ENCODE measurements at regions of chr1 and their contacts with region 1.

Region 1: DNA sequence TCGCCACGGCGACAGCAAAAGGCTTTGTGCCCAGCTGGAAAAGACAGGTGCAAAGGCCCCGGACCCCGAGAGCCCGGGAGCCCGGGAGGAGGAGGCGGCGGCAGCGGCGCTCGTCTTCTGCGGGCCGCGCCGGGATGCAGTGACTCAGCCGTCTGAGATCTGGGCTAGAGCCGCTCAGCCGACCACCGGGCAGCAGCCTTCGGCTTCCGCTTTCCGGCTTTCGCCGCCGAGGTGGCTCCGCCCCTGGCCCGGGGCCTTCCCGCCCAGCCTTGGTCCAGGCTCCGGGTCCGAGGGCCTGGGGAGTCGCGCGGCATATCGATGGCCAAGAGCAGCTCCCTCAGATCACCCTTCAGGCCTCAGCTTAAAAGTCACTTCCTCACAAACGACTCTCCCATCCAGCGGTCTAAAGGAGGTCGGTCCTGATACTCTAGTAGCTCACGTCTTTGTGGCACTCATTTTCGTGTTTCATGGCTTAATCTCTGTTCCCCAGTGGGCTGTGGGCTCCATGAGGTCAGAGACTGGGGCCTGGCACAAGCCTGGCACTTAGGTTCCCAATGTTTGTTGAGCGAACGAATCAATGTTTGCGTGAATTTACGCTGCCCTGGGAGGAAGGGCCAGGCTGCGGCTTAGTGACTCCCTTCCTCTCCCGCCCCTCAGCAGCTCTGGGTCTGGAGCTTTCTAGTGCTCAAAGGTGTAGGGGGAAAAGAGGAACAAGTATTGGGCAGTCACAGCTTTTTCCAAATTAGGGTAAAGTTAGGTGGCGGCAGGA is at the start of gene PHTF1:
- DNase-seq: peak; percentile 69 to 82 (median 80)
- H3K4me3 ChIP-seq: peak within 1 kb of the TSS; percentile 86 to 97 (median 92)
- H3K27ac ChIP-seq: peak within 1 kb of the TSS; percentile 90 to 98 (median 96)
- H3K4me1 ChIP-seq: peaks cover 0 to 20% of the 10 kb centered on the region in 2 donors
- H3K27me3 ChIP-seq: no peaks in the 10 kb centered on the region
- CTCF ChIP-seq: no peak
- POLR2A ChIP-seq: peak in 1 of 2 donors; percentile 81
- total RNA-seq, gene PHTF1: 16.8 to 37.9 (median 21.8) TPM

Region 2: GRCh38 chr1:113804421-113805255 is 45.1 kb after region 1 on chr1:
- intact Hi-C with region 1: loop called in 1 of 2 experiments (anchors 10 kb)
- DNase-seq: peak in 2 of 7 donors; percentile 24 to 33
- H3K4me3 ChIP-seq: peak overlapping the region in 1 of 4 donors; percentile 10
- H3K27ac ChIP-seq: peak overlapping the region; percentile 48 to 76 (median 71)
- H3K4me1 ChIP-seq: peaks cover 29 to 54% of the 10 kb centered on the region in 2 donors
- H3K27me3 ChIP-seq: no peaks in the 10 kb centered on the region
- CTCF ChIP-seq: no peak
- POLR2A ChIP-seq: peak in 1 of 2 donors; percentile 11

Region 3: DNA sequence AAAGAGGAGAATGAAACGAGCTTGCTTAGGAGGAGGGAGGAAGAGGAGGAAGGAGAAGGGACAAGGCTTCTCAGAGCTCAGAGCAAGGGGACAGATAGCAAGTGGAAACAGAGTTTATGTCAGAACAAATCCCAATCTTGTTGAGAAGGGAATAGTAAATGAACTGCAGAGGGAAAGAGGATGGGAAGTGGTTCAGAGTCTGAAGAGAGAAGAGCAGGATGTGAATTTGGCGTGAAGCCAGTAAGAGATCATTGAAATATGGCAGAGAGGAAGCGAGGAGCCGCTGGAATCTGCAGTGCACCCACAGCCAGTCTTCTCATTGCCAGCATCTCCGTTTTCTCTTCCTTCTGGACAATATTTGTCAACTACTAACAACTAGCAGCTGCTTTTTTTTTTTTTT is 238.8 kb after region 1 on chr1:
- intact Hi-C with region 1: no loop called
- DNase-seq: peak in 2 of 7 donors; percentile 23 to 54
- H3K4me3 ChIP-seq: no peak overlapping the region
- H3K27ac ChIP-seq: peak overlapping the region in 1 of 5 donors; percentile 32
- H3K4me1 ChIP-seq: peaks cover 0 to 6% of the 10 kb centered on the region in 2 donors
- H3K27me3 ChIP-seq: no peaks in the 10 kb centered on the region
- CTCF ChIP-seq: no peak
- POLR2A ChIP-seq: no peak

Region 4: DNA sequence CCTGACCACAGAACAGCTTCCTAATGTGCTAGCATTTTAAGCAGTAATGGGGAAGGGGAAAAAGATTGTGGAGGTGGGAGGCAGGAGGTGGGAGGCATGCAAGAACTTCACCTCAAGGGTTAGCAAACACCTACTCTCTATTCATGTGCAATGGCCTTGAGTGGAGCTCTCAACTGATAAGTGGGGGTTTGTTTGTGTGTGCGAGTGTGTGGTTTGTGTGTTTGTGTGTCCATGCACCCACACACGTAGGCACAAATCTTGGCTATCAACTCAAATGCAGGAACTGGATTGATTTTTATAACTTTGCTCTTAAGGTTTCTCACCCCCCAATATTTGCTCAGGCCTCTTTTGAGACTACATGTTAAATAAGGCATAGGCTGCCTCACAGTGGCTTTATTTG is 315.6 kb after region 1 on chr1:
- intact Hi-C with region 1: no loop called
- DNase-seq: no peak
- H3K4me3 ChIP-seq: no peak overlapping the region
- H3K27ac ChIP-seq: no peak overlapping the region
- H3K4me1 ChIP-seq: no peaks in the 10 kb centered on the region
- H3K27me3 ChIP-seq: no peaks in the 10 kb centered on the region
- CTCF ChIP-seq: no peak
- POLR2A ChIP-seq: no peak